ENCODE measurements at regions of chr11 and their contacts with region 1.

Region 1: DNA sequence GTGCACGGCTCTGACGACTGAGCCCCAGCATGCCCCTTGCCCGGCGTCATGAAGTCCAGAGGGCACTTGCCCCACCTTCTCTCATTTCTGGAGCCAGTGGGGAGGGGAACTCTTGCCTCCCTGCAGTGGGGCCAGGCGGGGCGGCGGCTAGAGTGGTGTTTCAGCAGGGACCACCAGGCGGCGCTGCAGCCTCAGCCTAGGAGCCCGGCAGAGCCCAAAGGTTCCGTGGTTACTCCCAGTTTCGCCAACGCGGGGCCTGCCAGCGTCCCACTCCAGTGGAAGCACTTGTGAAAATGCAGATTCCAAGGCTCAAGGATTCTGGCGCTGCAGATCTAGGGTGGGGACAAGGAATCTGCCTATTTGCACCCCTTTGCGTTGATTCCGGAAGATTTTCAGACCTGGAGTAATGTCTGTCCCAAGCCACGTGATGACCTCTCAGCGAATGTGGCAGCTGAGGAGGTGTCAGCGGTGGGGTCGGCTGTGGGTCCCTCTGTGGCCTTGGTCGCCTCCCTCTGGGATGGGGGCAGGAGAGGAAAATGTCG is 55.7 kb downstream of the CD82 start:
- DNase-seq: peak; percentile 74
- H3K27ac ChIP-seq: no peak overlapping the region
- CTCF ChIP-seq: peak; percentile 93

Region 2: DNA sequence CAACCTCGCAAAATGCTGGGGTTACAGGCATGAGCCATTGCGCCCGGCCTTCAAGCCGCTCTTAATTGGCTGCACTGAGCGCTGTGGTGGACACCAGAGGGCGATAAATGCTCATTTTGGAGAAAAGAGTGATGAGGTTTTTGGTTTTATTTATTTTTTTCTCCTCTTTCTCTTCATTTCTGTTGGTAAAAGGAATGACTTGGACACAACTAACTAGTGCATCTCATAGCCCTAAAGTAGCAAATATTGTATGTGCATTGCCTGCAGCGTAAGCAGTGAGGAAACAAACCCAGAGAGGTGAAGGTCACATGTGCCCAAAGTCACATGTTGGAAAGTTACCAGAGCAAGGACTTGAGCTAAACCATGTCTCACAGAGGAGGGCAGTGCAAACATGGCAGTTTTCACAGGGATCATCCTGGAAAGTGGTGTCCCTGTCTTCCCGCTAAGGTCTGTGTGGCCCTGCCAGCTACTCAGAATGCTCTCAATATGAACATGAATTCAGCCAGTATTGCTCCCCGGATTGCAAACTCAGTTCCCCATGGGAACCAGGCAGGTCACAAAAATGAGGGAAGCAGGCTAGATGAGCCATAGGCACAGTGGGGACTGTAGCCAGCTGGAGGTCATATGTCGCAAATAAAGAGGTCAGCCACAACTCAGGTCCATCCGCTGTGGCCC is 64.3 kb before region 1 on chr11:
- CTCF ChIA-PET with region 1: interaction called, 103 read pairs
- POLR2A ChIA-PET with region 1: no interaction called
- DNase-seq: no peak
- H3K27ac ChIP-seq: peak overlapping the region; percentile 22; the same call in 1 of the 2 replicates
- CTCF ChIP-seq: peak; percentile 85

Region 3: DNA sequence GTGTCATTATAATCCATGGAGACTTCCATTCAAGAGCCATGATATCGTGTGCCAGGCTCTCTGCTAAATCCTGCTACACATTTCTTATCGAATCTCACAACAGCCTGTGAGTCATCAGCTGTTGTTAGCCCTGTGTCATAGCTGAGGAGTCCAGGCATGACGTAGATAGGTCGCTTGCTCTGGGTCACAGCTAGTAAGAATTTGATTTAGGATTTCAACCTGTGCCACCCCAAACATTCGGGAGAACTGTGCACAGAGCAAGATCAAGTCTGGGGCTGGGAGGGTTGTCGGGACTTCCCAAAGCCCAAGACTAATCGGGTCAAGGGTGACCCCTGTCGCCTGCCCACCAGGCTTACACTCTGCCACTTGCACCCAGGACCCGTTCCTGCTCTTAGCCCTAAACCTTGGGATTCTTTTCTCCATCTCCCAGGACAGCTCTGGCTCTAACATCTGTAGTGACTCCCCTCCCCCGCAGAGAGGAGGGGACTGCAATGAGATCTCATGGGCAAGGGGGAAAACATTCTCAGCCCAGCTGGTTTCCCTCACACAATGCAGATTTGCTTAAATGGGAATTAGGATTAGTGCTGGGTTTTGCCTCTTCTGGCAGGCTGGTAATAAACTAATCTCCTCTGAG is 139.8 kb after region 1 on chr11:
- CTCF ChIA-PET with region 1: no interaction called
- POLR2A ChIA-PET with region 1: interaction called, 12 read pairs
- DNase-seq: peak; percentile 70
- H3K27ac ChIP-seq: no peak overlapping the region
- CTCF ChIP-seq: no peak

Measured in RWPE1 (cell line).